ENCODE measurements at regions of chr6 and their contacts with region 1.

Region 1: GRCh38 chr6:127302728-127303660 is 36.3 kb downstream of the RNF146 start:
- DNase-seq: no peak
- ATAC-seq: peak; percentile 35 to 49
- H3K4me3 ChIP-seq: no peak overlapping the region
- H3K27ac ChIP-seq: no peak overlapping the region
- H3K4me1 ChIP-seq: peaks cover 9 to 13% of the 10 kb centered on the region in 2 donors
- H3K27me3 ChIP-seq: no peaks in the 10 kb centered on the region
- CTCF ChIP-seq: peak in 4 of 5 experiments; percentile 39 to 63 (median 60)
- POLR2A ChIP-seq: no peak

Region 2: DNA sequence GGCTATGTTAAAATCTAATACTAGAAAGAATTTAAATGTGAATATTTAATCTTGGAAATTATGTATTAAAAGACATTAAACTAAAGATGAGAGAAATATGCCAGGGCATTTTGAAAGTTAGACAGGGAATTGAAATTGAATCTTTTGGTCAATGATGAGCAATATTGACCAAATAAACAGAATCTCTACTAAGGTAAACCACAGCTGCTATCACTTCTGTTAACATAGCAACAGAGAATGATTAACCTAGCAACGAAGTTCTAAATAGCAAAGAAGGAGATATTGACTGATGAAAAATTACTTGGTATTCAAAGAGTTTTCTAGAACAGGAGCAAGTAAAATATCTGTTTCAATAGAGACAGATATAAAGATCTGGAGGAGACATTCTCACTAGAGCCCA is 229.8 kb before region 1 on chr6:
- in situ Hi-C with region 1: no loop called
- intact Hi-C with region 1: no loop called
- DNase-seq: no peak
- ATAC-seq: no peak
- H3K4me3 ChIP-seq: no peak overlapping the region
- H3K27ac ChIP-seq: no peak overlapping the region
- H3K4me1 ChIP-seq: no peaks in the 10 kb centered on the region
- H3K27me3 ChIP-seq: no peaks in the 10 kb centered on the region
- CTCF ChIP-seq: no peak
- POLR2A ChIP-seq: no peak

Region 3: DNA sequence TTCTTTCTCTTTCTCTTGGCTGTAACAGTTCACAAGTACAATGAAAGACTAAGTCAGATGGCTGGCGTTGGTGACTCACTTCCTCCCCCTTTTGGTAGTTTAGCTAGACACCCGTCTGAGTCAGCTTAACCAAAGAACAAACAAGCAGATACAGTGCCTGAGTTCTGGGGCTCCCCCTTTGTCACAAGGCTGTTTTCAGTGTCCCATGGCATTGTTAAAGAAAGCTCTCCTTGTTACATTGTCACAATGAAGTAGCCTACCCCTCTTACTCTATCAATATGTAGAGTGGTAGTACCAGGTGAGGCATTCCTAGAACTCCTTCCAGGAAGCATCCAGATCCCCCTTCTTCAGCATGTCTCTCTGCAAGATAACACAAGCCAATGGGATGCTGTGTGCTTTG is 117.6 kb after region 1 on chr6:
- in situ Hi-C with region 1: no loop called
- intact Hi-C with region 1: loop called (anchors 2 kb)
- DNase-seq: peak; percentile 40 to 52
- ATAC-seq: peak; percentile 95 to 99
- H3K4me3 ChIP-seq: no peak overlapping the region
- H3K27ac ChIP-seq: no peak overlapping the region
- H3K4me1 ChIP-seq: peaks cover 0 to 6% of the 10 kb centered on the region in 2 donors
- H3K27me3 ChIP-seq: no peaks in the 10 kb centered on the region
- CTCF ChIP-seq: no peak
- POLR2A ChIP-seq: no peak

Region 4: DNA sequence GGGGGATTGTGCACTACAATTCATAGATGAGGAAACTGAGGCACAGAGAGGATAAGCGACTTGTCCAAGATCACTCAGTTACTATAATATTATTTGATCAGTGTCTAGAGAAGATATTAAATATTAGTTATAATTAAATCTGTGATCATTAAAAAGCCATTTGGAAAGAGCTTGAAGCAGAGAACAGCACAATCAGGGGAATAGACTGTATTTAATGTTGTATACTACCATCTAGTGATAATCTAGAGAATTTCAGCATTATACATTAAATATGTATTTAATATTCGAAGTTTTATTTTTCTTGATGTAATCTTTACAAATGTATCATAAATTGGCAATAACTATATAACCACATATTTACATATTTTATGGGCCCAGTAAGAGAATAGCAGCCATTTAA is 236.3 kb after region 1 on chr6:
- in situ Hi-C with region 1: loop called in 3 of 4 experiments (anchors 10 kb)
- intact Hi-C with region 1: loop called (anchors 5 kb)
- DNase-seq: no peak
- ATAC-seq: peak; percentile 39 to 60
- H3K4me3 ChIP-seq: no peak overlapping the region
- H3K27ac ChIP-seq: no peak overlapping the region
- H3K4me1 ChIP-seq: no peaks in the 10 kb centered on the region
- H3K27me3 ChIP-seq: no peaks in the 10 kb centered on the region
- CTCF ChIP-seq: peak in 4 of 5 experiments; percentile 34 to 51 (median 40)
- POLR2A ChIP-seq: no peak